Cardiac septum (tissue), 1 donor: ENCODE measurements at regions of chr12 and their contacts with region 1.

Region 1: DNA sequence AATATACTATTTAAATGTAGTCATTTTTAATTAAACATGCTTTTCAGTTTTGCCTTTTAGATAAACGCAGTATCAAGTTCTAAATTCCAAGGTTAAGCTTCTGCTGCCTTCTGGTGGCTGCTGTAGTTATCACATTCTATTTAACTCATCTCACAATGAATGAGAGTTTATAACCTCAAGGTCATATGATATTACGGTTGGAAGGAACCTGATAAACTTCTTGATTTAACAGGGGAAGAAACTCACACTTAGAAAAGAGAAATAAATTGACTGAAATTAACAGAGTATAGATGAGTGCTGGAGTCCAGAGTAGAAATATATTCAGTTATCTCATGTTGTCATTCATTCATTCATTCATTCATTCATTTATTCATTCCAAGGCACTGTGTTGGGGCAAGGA is 31.9 kb downstream of the GUCY2C start:
- DNase-seq: no peak

Region 2: DNA sequence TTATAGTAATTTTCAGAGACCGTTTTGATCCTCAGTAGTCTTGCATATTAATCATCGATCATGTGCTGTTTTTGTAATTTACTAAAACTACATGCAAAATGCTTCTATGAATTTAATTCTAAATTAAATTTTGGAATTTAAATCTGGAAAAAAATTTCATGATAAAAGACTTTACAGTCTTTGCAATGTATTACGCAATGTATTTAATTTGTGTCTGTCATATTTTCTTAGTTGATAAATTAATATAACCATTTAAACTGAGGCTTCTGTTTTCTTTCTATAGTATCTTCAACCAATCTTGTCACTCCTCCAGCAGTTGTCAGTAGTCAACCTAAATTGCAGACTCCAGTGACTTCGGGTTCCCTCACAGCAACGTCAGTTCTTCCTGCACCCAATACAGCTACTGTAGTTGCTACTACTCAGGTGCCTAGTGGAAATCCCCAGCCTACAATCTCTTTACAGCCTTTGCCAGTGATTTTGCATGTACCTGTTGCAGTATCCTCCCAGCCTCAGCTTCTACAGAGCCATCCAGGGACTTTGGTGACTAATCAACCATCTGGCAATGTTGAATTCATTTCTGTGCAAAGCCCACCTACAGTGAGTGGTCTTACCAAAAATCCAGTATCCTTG is 204.2 kb before region 1 on chr12:
- intact Hi-C with region 1: no loop called
- DNase-seq: no peak

Region 3: DNA sequence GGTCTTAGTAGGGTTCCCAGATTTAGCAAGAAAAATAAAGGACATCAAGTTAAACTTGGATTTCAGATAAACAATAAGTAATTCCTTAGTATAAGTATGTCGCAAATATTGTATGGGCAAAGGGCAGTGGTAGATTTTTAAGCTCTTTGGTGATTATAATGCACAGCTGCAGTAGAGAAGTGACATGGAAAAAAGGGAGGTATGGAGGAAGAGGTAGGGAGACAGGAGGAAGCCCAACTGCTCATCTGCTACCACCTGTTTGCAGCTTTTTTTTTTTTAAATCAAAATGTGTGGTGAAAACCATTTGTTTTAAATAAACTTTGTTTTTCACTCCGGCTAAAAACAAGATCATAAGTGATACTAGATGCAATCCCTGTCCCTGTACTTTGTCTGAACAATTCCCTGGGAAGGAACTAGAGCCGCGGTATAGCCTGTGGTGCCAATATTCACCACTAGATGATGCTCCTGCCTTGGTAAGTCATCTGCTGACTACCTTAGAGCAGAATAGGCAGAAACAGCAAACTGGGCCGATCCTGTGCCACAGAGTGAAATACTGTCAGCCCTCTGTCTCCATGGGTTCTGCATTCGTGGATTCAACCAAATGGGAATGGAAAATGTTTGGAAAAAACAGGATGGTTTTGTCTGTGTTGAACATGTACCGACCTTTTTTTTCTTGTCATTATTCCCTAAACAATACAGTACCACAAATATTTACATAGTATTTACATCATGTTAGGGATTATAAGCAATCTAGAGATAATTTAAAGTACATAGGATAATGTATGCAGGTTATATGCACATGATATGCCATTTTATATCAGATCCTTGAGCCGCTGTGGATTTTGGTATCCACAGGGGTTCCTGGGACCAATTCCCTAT is 34.4 kb before region 1 on chr12:
- intact Hi-C with region 1: loop called (anchors 5 kb)
- DNase-seq: no peak